ENCODE measurements at regions of chr4 and their contacts with region 1.

Region 1: DNA sequence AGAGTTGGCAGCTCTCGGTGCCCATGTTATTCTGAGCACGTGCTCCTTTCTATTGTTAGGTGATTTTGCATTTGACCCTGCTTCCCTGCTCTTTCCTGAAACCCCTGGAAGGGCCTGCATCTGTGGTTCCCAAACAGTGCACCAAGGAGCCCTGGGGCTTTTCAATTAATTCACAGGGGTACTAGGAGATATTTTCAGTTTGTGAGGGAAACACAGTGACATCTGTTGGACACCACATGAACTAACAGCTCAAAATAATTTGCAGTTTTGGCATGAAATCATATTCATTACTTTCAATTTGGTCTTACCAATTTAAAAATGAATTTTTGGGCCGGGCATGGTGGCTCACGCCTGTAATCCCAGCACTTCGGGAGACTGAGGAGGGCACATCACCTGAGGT is 156.6 kb downstream of the GATB start:
- DNase-seq: no peak
- ATAC-seq: no peak

Region 2: DNA sequence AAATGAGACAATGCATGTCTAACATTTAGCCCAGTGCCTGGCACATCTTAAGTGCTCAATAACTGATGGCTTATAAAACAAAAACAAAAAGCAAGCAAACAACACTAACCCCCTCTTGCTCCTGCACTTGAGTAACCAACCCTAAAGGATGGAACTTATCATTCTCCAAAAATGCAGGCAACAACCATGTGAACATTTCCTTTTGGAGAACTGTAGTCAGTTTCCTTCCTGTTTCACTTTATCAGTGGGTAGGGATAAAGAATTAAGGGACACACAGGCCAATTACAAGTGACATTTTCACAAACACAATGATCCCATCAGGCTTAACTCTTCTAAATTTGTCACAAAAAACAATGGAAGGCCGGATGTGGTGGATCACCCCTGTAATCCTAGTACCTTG is 474.4 kb before region 1 on chr4:
- intact Hi-C with region 1: loop called (anchors 10 kb)
- DNase-seq: no peak
- ATAC-seq: no peak

Region 3: GRCh38 chr4:151195801-151196200 is 408.4 kb before region 1 on chr4:
- intact Hi-C with region 1: no loop called
- DNase-seq: no peak
- ATAC-seq: no peak